ENCODE measurements at regions of chr5 and their contacts with region 1.

Region 1: GRCh38 chr5:54254482-54255198 is 55.7 kb downstream of the ARL15 start:
- DNase-seq: no peak
- ATAC-seq: no peak
- H3K4me3 ChIP-seq: no peak overlapping the region
- H3K27ac ChIP-seq: no peak overlapping the region
- H3K4me1 ChIP-seq: no peaks in the 10 kb centered on the region
- H3K27me3 ChIP-seq: no peaks in the 10 kb centered on the region
- CTCF ChIP-seq: no peak
- POLR2A ChIP-seq: no peak
- RAD21 ChIP-seq: 0 out of 2 replicates have a peak, but pooled peaks have one; percentile 7

Region 2: GRCh38 chr5:53631251-53631650 is 623.4 kb before region 1 on chr5:
- CTCF ChIA-PET with region 1: no interaction called
- POLR2A ChIA-PET with region 1: interaction called, 13 read pairs
- dilution Hi-C with region 1: no loop called
- in situ Hi-C with region 1: no loop called
- intact Hi-C with region 1: no loop called
- DNase-seq: no peak
- ATAC-seq: no peak
- H3K4me3 ChIP-seq: no peak overlapping the region
- H3K27ac ChIP-seq: no peak overlapping the region
- H3K4me1 ChIP-seq: no peaks in the 10 kb centered on the region
- H3K27me3 ChIP-seq: no peaks in the 10 kb centered on the region
- CTCF ChIP-seq: no peak
- POLR2A ChIP-seq: no peak
- RAD21 ChIP-seq: no peak

Region 3: DNA sequence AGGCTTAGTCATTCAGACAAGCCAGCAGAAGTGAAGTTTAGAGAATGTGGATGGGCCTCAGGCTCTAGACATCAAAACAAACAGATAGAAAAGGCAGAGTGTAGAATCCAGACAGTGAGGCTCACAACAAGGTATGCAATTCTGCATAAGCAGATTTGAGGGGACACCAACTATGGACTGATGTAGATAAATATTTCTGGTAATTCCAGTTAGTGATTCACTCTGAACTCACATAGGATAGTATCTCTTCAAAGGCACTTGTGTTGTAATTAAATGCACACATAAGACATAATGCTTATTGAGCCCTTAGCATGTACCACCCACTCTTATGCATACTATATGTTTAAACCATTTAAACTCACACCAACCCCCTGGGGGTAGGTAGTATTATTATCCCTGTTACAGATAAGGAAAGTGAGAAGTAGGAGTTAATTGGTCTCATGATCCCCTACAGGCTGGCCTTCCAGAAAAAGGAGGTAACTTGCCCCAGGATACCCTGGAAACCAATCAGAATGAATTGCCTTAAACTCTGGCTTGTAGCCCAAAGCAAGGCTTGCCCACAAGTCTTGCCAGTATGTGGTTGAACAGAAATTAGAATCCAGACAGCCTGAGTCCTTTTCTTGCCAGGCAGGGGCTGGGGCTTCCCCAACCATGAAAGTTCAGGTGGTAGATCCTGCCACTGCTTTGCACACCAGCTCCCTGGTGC is 161.4 kb after region 1 on chr5:
- CTCF ChIA-PET with region 1: interaction called, 3 read pairs
- POLR2A ChIA-PET with region 1: no interaction called
- dilution Hi-C with region 1: no loop called
- in situ Hi-C with region 1: loop called (anchors 5 kb)
- intact Hi-C with region 1: no loop called
- DNase-seq: peak; percentile 42
- ATAC-seq: peak; percentile 88
- H3K4me3 ChIP-seq: no peak overlapping the region
- H3K27ac ChIP-seq: no peak overlapping the region
- H3K4me1 ChIP-seq: peaks cover 3% of the 10 kb centered on the region
- H3K27me3 ChIP-seq: peaks cover 8% of the 10 kb centered on the region
- CTCF ChIP-seq: no peak
- POLR2A ChIP-seq: no peak
- RAD21 ChIP-seq: no peak

Measured in IMR-90 (cell line).